Vagina (tissue), 2 donors: ENCODE measurements at regions of chr4 and their contacts with region 1.

Region 1: GRCh38 chr4:179492260-179493080 is 2050.2 kb upstream of the AGA start:
- DNase-seq: no peak
- H3K4me3 ChIP-seq: no peak overlapping the region
- H3K27ac ChIP-seq: no peak overlapping the region
- H3K4me1 ChIP-seq: no peaks in the 10 kb centered on the region
- H3K27me3 ChIP-seq: no peaks in the 10 kb centered on the region
- CTCF ChIP-seq: no peak
- POLR2A ChIP-seq: no peak

Region 2: DNA sequence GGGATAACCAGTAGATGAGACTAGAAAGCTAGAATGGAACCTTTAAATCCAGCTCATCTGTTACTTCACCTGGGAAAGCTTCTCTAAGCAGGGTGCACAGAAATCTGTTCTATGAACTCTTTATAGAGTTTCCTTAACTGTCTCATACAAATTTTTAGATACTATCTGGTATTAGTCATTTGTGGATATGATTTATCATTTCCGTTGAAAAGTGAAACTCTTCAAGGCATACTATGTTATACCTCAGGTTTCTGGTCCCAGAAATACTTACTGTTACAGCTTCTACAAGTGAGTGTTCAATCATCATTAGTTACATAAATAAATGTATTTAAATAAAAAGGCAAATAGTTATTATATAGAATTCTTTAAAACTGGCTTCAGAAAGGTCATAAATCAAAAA is 1751.9 kb before region 1 on chr4:
- intact Hi-C with region 1: loop called (anchors 10 kb)
- DNase-seq: no peak
- H3K4me3 ChIP-seq: no peak overlapping the region
- H3K27ac ChIP-seq: no peak overlapping the region
- H3K4me1 ChIP-seq: no peaks in the 10 kb centered on the region
- H3K27me3 ChIP-seq: no peaks in the 10 kb centered on the region
- CTCF ChIP-seq: no peak
- POLR2A ChIP-seq: no peak